Esophagus muscularis mucosa (tissue), 4 donors: ENCODE measurements at regions of chr9 and their contacts with region 1.

Region 1: GRCh38 chr9:103364753-103365152 is 369.6 kb downstream of the CYLC2 start:
- DNase-seq: no peak
- H3K4me3 ChIP-seq: no peak overlapping the region
- H3K27ac ChIP-seq: no peak overlapping the region
- H3K4me1 ChIP-seq: no peaks in the 10 kb centered on the region
- H3K27me3 ChIP-seq: no peaks in the 10 kb centered on the region
- CTCF ChIP-seq: no peak
- EP300 ChIP-seq: no peak
- POLR2A ChIP-seq: no peak

Region 2: DNA sequence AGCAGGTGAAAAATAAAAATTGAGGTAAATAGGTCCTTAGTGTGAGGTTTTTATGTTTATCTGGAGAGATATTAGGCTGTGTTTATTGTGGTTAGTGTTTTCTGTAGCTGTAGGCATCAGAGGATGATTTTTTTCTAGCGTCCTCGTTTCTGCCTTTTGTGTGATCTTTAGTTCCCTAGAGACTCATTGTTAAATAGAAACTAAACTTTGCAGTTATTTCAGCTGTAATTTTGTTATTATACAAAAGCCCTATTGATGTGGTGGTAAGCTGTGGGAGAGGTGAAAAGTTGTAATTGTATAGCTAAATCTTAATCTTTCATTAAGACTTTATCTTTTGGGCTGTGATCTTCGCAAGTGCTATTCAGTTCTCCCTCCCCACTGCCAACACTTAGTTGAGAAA is 29.3 kb before region 1 on chr9:
- intact Hi-C with region 1: loop called (anchors 2 kb)
- DNase-seq: no peak
- H3K4me3 ChIP-seq: no peak overlapping the region
- H3K27ac ChIP-seq: no peak overlapping the region
- H3K4me1 ChIP-seq: no peaks in the 10 kb centered on the region
- H3K27me3 ChIP-seq: no peaks in the 10 kb centered on the region
- CTCF ChIP-seq: no peak
- EP300 ChIP-seq: no peak
- POLR2A ChIP-seq: no peak